GM12878 (cell line): ENCODE measurements at regions of chr17 and their contacts with region 1.

Region 1: DNA sequence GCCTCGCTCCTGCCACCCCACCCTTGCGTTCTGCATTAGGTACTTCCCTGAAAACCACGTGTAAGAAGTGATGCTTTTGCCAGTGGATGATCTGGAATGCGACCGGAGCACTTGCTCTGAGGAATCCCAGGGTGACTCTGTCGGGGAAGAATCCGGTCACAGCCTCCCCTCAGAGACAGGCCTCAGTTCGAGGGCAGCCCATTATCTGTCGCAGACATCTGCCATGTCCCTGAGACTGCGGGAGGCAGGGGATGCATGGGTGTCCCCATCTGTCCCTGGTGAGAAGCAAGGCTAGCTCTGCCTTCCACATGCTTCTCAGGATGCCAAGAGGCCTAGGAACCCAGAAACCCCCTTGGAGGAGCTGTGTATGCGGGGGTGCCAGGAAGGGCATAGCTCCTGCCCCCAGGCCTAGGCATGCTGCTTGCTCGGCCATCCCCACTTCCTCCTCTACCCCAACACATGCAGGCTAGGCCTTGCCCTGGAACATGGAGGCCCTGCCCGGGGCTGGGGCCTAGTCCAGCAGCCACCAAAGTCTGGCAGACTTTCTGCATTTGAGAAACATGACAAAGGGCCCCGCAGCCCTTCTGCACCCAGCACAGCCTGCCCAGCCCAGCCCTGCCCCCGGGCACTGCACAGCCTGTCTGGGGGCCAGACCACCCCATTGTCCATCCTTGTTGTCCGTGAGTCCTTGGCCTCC is 20.5 kb downstream of the MNT start:
- DNase-seq: no peak
- ATAC-seq: no peak
- H3K4me3 ChIP-seq: no peak overlapping the region
- H3K27ac ChIP-seq: no peak overlapping the region
- H3K4me1 ChIP-seq: no peaks in the 10 kb centered on the region
- H3K27me3 ChIP-seq: no peaks in the 10 kb centered on the region
- CTCF ChIP-seq: no peak
- EP300 ChIP-seq: no peak
- POLR2A ChIP-seq: no peak
- RAD21 ChIP-seq: no peak

Region 2: DNA sequence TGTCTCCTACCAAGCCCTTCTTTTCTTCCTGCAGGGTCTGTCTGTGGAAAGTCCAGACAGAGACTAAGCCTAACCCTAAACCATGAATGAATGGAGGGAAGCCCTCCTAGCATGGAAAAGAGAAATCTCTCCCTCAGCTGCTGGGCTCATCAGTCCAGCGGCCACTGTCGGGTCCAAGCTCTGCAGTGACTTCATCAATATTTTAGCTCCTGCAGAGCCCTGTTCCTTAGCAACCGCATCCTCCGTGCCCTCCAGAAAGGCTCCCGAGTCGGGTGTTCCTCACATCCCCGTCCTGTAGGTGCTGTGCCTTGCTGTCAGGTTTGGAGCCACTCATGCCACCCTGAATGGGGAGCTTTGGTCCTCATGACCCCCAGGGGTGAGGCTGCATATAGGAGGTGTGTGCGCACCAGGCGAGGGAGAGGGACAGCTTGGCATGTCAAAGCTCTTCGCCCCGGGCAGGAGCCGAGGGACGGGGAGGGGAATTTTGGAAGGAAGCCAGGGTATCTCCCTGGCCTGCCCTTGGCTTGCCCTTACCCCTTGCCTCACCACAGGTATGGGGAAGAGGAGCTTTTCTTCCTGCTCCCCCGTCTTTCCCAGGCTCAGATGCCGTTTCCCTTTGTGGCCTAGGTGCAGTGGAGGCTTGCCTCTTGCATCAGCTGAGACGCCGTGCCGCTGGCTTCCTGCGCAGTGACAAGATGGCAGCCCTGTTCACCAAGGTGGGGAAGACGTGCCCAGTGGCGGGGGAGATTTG is 19.2 kb before region 1 on chr17:
- CTCF ChIA-PET with region 1: interaction called, 11 read pairs
- POLR2A ChIA-PET with region 1: no interaction called
- RAD21 ChIA-PET with region 1: interaction called, 3 read pairs
- SMC1A ChIA-PET with region 1: interaction called, 3 read pairs
- in situ Hi-C with region 1: no loop called
- intact Hi-C with region 1: no loop called
- DNase-seq: no peak
- ATAC-seq: no peak
- H3K4me3 ChIP-seq: no peak overlapping the region
- H3K27ac ChIP-seq: no peak overlapping the region
- H3K4me1 ChIP-seq: no peaks in the 10 kb centered on the region
- H3K27me3 ChIP-seq: no peaks in the 10 kb centered on the region
- CTCF ChIP-seq: no peak
- EP300 ChIP-seq: no peak
- POLR2A ChIP-seq: no peak
- RAD21 ChIP-seq: no peak

Region 3: GRCh38 chr17:2369551-2370210 is 10.7 kb before region 1 on chr17:
- CTCF ChIA-PET with region 1: interaction called, 12 read pairs
- POLR2A ChIA-PET with region 1: no interaction called
- RAD21 ChIA-PET with region 1: interaction called, 9 read pairs
- SMC1A ChIA-PET with region 1: interaction called, 4 read pairs
- in situ Hi-C with region 1: no loop called
- intact Hi-C with region 1: no loop called
- DNase-seq: no peak
- ATAC-seq: no peak
- H3K4me3 ChIP-seq: no peak overlapping the region
- H3K27ac ChIP-seq: no peak overlapping the region
- H3K4me1 ChIP-seq: no peaks in the 10 kb centered on the region
- H3K27me3 ChIP-seq: no peaks in the 10 kb centered on the region
- CTCF ChIP-seq: 0 out of 6 replicates have a peak, but pooled peaks of 1 of the 3 experiments have one; percentile 1
- EP300 ChIP-seq: no peak
- POLR2A ChIP-seq: no peak
- RAD21 ChIP-seq: no peak

Region 4: DNA sequence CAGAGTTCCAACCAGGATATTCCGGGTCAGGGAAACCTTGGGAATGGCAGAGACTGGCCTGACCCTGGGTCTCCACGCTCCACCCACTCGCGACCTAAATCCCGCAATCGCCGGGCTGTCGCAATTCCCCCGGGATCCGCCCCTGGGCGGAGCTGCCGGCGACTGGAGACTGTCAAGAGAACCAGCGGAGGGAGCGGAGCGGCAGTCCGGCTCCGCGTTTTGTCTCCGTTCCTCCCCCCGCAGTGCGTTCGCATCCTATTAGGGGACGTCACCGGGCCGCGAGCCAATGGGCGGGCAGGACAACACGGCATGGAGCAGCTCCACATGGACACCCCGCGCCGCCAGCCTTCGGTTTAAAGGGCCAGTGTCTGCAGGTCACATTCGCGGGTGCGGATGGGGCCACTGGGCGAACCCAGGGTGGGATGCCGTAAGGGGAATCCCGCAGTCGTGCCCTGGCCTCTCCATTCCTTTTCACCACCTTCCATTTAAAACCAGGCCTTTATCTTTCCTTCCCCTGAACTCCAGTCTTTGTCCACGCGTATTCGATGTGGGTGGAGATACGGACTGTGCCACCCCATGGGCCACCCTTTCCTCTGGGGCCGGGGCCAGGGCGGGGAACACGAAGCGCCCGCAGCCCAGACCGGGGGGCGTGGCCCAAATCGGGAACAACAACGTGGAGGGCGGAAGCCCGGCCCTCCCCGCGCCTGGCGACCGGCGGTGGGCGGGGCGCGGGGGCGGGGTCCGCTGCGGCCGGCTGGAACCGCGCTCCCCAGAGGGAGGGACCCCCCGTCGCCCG is 21.2 kb after region 1 on chr17:
- CTCF ChIA-PET with region 1: interaction called, 105 read pairs
- POLR2A ChIA-PET with region 1: interaction called, 8 read pairs
- RAD21 ChIA-PET with region 1: interaction called, 54 read pairs
- SMC1A ChIA-PET with region 1: interaction called, 35 read pairs
- in situ Hi-C with region 1: no loop called
- intact Hi-C with region 1: no loop called
- DNase-seq: peak; percentile 96
- ATAC-seq: peak; percentile 72
- H3K4me3 ChIP-seq: peak overlapping the region; percentile 87
- H3K27ac ChIP-seq: peak overlapping the region; percentile 95
- H3K4me1 ChIP-seq: peaks cover 11% of the 10 kb centered on the region
- H3K27me3 ChIP-seq: no peaks in the 10 kb centered on the region
- CTCF ChIP-seq: no peak
- EP300 ChIP-seq: 0 out of 4 replicates have a peak, but pooled peaks of 1 of the 2 experiments have one; percentile 10
- POLR2A ChIP-seq: 0 out of 2 replicates have a peak, but pooled peaks have one; percentile 41
- RAD21 ChIP-seq: no peak

Region 5: GRCh38 chr17:2435181-2435741 is 54.9 kb after region 1 on chr17:
- CTCF ChIA-PET with region 1: interaction called, 17 read pairs
- POLR2A ChIA-PET with region 1: no interaction called
- RAD21 ChIA-PET with region 1: interaction called, 3 read pairs
- SMC1A ChIA-PET with region 1: no interaction called
- in situ Hi-C with region 1: no loop called
- intact Hi-C with region 1: no loop called
- DNase-seq: no peak
- ATAC-seq: no peak
- H3K4me3 ChIP-seq: no peak overlapping the region
- H3K27ac ChIP-seq: no peak overlapping the region
- H3K4me1 ChIP-seq: no peaks in the 10 kb centered on the region
- H3K27me3 ChIP-seq: no peaks in the 10 kb centered on the region
- CTCF ChIP-seq: no peak
- EP300 ChIP-seq: no peak
- POLR2A ChIP-seq: no peak
- RAD21 ChIP-seq: no peak